PC-3 (cell line): ENCODE measurements at regions of chrX and their contacts with region 1.

Region 1: GRCh38 chrX:38803586-38804431 is 2.5 kb downstream of the MID1IP1 start:
- DNase-seq: peak; percentile 86
- ATAC-seq: peak; percentile 79
- H3K4me3 ChIP-seq: peak overlapping the region; percentile 96
- H3K27ac ChIP-seq: peak overlapping the region; percentile 85
- H3K4me1 ChIP-seq: peaks cover 40% of the 10 kb centered on the region
- H3K27me3 ChIP-seq: no peaks in the 10 kb centered on the region
- CTCF ChIP-seq: no peak

Region 2: DNA sequence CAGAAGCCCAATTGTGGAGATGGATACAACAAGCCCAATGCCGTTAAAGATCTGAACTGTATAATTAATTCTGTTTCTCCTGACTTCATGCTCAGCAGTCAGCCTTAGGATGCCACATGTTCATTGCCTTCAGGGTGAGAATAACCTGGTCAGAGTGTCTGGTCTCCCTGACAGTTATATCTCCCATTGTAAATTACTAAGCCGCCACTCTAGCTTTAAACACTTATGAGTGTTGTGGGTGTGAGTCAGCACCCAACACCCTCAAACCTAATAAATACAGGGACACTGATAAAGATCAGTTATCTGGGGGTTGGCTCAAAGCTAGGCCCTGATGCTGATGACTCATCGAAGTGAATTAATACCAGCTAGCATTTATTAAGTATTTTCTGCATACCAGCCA is 891.5 kb before region 1 on chrX:
- CTCF ChIA-PET with region 1: no interaction called
- POLR2A ChIA-PET with region 1: interaction called, 12 read pairs
- intact Hi-C with region 1: no loop called
- DNase-seq: peak; percentile 38
- ATAC-seq: peak; percentile 84
- H3K4me3 ChIP-seq: no peak overlapping the region
- H3K27ac ChIP-seq: 0 out of 2 replicates have a peak overlapping the region, but pooled peaks have one; percentile 18
- H3K4me1 ChIP-seq: peaks cover 13% of the 10 kb centered on the region
- H3K27me3 ChIP-seq: no peaks in the 10 kb centered on the region
- CTCF ChIP-seq: no peak

Region 3: DNA sequence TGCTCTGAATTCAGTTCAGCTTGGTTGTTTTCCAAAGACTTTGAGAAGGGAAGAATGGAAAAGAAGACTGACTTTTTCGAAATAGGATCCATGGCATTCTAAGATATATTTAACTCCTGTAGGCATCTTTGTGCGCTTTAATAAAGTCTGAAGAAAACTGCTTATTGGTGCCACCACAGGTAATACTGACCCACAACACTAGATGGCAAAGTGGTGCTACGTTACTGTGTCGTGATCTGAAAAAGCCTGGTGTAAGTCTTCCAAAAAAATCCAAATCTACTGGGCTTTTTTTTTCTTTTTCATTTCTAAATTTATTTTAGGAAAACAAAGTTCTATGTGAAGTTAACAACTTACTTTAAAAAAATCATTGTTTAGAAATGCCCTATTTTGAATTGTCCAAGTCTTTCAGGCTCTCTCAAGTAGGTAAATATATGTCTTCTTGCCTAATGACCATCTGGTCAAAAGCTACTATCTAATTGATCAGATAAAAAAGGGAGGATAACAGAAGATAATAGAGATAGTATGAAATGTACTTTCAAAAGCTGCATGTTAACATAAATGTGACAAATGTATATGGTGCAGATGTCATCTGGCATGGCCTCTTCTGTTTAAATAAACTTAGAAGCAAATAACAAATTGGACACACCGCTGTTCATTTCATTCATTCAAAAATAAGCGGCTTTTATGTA is 49.6 kb before region 1 on chrX:
- CTCF ChIA-PET with region 1: interaction called, 10 read pairs
- POLR2A ChIA-PET with region 1: no interaction called
- intact Hi-C with region 1: no loop called
- DNase-seq: peak; percentile 68
- ATAC-seq: peak; percentile 61
- H3K4me3 ChIP-seq: no peak overlapping the region
- H3K27ac ChIP-seq: no peak overlapping the region
- H3K4me1 ChIP-seq: no peaks in the 10 kb centered on the region
- H3K27me3 ChIP-seq: peaks cover 29% of the 10 kb centered on the region
- CTCF ChIP-seq: peak; percentile 78

Region 4: DNA sequence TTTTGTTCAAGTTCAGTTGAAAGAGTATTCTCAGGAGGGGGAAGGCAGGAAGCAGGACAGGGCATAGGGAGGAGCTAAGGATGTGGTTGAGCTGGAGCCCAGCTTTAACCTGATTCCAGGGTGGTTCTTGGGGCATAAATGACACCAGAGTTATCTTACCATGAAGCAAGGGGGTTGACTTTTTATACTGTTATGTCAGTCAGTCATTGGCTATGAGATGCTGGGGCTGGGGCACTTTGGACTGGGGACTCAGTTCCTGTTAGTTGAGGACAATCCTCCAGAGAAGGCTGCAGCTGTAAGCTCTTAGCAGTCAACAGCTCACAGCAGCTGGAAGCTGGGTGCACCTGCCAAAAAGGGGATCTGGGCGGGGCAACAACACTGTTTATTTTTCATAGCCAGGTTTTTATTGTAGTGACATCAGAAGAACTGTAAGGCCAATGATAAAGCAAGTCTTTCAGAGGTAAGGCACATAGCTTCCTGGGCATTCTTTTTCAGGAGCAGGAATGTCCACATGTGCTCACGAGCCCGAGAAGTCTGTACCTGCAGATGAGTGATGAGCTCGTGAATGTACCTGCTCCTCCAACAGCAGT is 75.9 kb after region 1 on chrX:
- CTCF ChIA-PET with region 1: interaction called, 5 read pairs
- POLR2A ChIA-PET with region 1: interaction called, 5 read pairs
- intact Hi-C with region 1: loop called (anchors 1 kb)
- DNase-seq: peak; percentile 66
- ATAC-seq: peak; percentile 4
- H3K4me3 ChIP-seq: peak overlapping the region; percentile 38; the same call in 1 of the 2 replicates
- H3K27ac ChIP-seq: peak overlapping the region; percentile 97
- H3K4me1 ChIP-seq: peaks cover 57% of the 10 kb centered on the region
- H3K27me3 ChIP-seq: no peaks in the 10 kb centered on the region
- CTCF ChIP-seq: no peak

Region 5: DNA sequence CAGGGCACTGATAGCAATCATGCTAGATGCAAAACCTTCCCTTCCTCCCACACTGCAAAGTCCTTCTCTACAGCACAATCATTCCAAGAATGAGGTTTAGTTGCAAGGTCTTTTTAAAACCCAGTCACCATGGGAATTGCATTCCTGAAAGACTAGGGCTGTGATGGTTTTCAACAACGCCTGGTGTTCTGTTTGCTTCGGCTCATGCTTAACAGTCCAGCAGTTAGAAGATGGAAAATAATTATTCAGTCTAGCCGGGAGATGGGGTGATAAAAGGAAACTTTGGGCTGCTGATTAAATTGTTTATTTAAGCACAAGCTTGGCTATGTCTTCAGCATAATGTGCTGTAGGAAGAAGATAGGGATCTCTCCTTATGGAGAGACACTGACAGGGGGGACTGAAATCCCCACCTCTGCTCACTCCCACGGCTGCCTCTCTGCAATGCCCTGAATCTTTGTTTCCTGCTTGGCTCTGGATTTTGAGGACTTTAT is 208.9 kb after region 1 on chrX:
- CTCF ChIA-PET with region 1: no interaction called
- POLR2A ChIA-PET with region 1: no interaction called
- intact Hi-C with region 1: loop called (anchors 10 kb)
- DNase-seq: peak; percentile 27
- ATAC-seq: peak; percentile 15
- H3K4me3 ChIP-seq: no peak overlapping the region
- H3K27ac ChIP-seq: peak overlapping the region; percentile 93
- H3K4me1 ChIP-seq: peaks cover 36% of the 10 kb centered on the region
- H3K27me3 ChIP-seq: no peaks in the 10 kb centered on the region
- CTCF ChIP-seq: no peak

Region 6: DNA sequence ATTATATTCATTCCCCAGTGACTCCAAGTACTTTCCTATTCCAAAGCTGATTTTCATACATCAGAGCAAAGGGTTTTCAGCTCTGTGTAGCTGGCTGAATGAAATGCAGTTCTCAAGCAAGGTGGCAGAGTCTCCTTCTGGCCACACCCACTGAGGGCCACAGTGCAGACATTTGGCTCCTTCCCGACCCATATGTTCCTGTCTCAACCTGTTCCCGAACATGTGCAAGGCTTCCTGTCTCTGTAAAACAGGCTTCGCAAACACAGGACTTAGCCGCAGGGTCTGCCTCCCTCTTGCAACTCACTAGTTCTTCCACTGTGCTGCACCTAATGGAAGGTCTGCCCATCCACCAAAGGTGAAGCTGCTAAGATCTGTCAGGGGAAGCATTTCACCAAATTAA is 246.6 kb after region 1 on chrX:
- CTCF ChIA-PET with region 1: no interaction called
- POLR2A ChIA-PET with region 1: no interaction called
- intact Hi-C with region 1: no loop called
- DNase-seq: no peak
- ATAC-seq: no peak
- H3K4me3 ChIP-seq: no peak overlapping the region
- H3K27ac ChIP-seq: no peak overlapping the region
- H3K4me1 ChIP-seq: no peaks in the 10 kb centered on the region
- H3K27me3 ChIP-seq: no peaks in the 10 kb centered on the region
- CTCF ChIP-seq: no peak